Activated CD4-positive, alpha-beta T cell treated with anti-CD3 and anti-CD28 coated beads, Interleukin-2, amount 10 ng/mL, durations not matched to agents 7 days and 5 days (primary cell): ENCODE measurements at regions of chr14 and their contacts with region 1.

Region 1: GRCh38 chr14:24279301-24280186 is 8.1 kb upstream of the RABGGTA start:
- DNase-seq: peak; percentile 47
- H3K4me3 Mint-ChIP-seq: no peak overlapping the region
- H3K27ac Mint-ChIP-seq: peak overlapping the region; percentile 75
- H3K4me1 Mint-ChIP-seq: peaks cover 43% of the 10 kb centered on the region
- H3K27me3 Mint-ChIP-seq: peaks cover 3% of the 10 kb centered on the region

Region 2: DNA sequence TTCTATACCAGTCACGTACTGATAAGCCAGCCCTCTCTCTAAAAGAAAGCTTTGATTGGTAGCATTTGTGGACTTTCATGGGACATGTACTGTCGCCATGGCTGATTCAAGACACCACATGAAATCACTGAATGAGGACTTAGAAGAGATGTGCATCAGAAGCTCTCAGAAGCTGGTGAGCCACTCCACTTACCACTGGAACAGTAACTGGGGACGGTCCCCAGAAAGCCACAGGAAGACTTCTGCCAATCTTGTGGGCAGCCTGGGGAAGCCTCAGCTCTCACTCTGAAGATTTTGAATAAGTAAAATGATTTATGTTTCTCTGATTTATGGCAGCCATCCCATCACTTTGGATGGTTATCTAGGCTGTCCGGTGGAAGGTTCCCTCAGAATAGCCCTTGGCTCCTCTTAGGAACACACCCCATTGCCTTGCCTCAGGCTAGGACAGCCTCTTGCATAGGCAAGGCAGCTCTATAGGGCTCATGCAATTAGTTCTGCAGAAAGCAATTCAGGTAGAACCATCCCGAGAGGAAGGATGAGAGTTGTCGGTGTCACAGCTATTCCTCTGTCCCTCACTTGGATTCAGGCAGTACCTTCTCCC is 10.2 kb after region 1 on chr14:
- CTCF ChIA-PET with region 1: interaction called, 37 read pairs
- POLR2A ChIA-PET with region 1: interaction called, 3 read pairs
- DNase-seq: peak; percentile 50
- H3K4me3 Mint-ChIP-seq: no peak overlapping the region
- H3K27ac Mint-ChIP-seq: no peak overlapping the region
- H3K4me1 Mint-ChIP-seq: peaks cover 27% of the 10 kb centered on the region
- H3K27me3 Mint-ChIP-seq: peaks cover 2% of the 10 kb centered on the region

Region 3: DNA sequence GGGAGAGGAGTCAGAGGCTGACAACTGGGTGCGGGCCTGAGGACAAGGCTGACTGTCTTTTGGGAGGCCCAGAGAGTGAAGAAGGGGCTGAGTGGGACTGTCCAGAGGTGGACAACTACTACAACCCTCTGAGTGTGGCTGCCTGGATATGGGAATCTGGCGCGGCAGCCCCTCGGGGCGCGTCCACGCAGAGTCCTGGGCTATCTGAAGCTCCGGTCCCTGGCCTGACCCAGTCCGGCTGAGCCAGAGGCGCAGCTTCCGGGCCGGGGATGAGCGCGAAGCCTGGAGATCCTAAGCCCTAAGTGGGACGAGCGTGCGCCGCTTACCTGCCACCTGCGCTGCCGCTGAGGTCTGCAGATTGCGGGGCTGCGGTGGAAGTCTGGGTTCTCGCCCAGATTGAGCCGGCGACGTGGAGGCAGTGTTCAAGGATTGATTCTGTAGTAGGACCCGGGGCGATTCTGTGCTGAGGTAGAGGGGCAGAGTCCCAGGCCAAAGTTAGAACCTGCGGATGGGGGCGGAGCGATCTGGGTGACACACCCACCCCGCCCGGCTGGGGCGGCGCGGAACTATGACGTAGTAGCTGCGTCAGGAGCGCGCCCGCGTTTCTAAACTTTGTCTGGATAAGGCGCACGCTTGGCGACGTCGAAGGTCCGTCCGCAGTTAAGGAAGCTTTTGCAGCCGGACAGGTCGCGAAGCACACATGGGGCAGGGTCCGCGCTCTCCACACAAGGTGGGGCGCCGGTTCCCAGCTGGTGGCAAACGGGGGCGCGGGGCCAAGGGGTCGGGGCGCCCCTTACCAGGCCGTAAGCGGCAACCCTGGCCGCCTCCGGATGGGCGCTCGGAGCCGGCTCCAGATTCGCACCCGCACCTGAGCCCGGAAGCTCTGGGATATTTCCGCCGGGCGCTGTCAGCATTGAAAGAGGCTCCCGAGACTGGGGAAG is 20.0 kb after region 1 on chr14 and contains the starts of genes DHRS1 and NOP9:
- CTCF ChIA-PET with region 1: interaction called, 31 read pairs
- POLR2A ChIA-PET with region 1: no interaction called
- DNase-seq: peak; percentile 92
- H3K4me3 Mint-ChIP-seq: peak within 1 kb of the TSS; percentile 89
- H3K27ac Mint-ChIP-seq: peak within 1 kb of the TSS; percentile 93
- H3K4me1 Mint-ChIP-seq: peaks cover 53% of the 10 kb centered on the region
- H3K27me3 Mint-ChIP-seq: no peaks in the 10 kb centered on the region
- total RNA-seq, gene DHRS1: 31.7 to 35.0 TPM
- total RNA-seq, gene NOP9: 30.8 to 35.2 TPM